Activated CD4-positive, alpha-beta memory T cell treated with anti-CD3 and anti-CD28 coated beads, Interleukin-2, amount 10 ng/mL, durations not matched to agents 7 days and 5 days (primary cell): ENCODE measurements at regions of chr11 and their contacts with region 1.

Region 1: DNA sequence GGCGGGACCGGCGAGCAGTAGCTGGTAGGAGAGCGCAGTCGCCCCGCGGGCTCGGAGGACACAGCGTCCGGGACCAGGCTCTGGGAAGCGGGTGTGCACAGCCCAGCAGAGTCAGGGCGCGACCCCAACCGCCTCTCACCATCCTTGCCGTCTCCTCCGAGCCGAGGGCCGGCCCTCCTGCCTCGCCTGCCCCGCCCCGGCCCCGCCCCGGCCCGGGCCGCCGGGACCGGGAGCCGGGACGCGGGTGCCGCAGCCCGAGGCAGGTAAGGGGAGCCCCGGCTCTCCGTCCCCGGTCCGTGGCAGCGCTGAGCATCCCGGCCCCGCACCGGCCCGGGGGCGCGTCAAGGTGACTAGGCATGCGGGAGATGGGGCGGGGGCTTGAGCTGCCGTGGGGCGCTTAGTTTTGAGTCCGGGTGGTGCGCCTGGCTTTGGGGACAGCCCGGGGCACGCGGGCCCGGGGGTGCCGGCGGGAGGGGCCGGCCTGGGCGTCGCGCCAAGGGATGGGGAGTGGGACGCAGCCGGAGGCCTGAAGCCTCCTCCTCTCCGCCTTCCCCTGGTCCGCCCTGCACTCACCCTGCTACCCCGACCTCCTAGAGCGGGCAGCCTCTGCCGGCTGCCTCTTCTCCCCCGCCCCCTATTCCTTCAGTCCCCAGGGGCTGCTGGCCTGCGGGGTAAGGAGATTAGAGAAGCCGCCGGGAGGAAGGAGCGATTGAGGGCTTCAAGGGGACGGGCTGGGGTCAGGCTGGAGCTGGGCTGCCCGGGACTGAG is at the start of gene ABCG4:
- DNase-seq: peak; percentile 29
- H3K4me3 Mint-ChIP-seq: peak within 1 kb of the TSS; percentile 53
- H3K27ac Mint-ChIP-seq: no peak within 1 kb of the TSS
- H3K4me1 Mint-ChIP-seq: peaks cover 2% of the 10 kb centered on the region
- H3K27me3 Mint-ChIP-seq: peaks cover 60% of the 10 kb centered on the region
- total RNA-seq, gene ABCG4: not detected

Region 2: GRCh38 chr11:118552341-118552740 is 596.9 kb before region 1 on chr11:
- CTCF ChIA-PET with region 1: no interaction called
- POLR2A ChIA-PET with region 1: no interaction called
- DNase-seq: no peak
- H3K4me3 Mint-ChIP-seq: no peak overlapping the region
- H3K27ac Mint-ChIP-seq: no peak overlapping the region
- H3K4me1 Mint-ChIP-seq: no peaks in the 10 kb centered on the region
- H3K27me3 Mint-ChIP-seq: no peaks in the 10 kb centered on the region

Region 3: DNA sequence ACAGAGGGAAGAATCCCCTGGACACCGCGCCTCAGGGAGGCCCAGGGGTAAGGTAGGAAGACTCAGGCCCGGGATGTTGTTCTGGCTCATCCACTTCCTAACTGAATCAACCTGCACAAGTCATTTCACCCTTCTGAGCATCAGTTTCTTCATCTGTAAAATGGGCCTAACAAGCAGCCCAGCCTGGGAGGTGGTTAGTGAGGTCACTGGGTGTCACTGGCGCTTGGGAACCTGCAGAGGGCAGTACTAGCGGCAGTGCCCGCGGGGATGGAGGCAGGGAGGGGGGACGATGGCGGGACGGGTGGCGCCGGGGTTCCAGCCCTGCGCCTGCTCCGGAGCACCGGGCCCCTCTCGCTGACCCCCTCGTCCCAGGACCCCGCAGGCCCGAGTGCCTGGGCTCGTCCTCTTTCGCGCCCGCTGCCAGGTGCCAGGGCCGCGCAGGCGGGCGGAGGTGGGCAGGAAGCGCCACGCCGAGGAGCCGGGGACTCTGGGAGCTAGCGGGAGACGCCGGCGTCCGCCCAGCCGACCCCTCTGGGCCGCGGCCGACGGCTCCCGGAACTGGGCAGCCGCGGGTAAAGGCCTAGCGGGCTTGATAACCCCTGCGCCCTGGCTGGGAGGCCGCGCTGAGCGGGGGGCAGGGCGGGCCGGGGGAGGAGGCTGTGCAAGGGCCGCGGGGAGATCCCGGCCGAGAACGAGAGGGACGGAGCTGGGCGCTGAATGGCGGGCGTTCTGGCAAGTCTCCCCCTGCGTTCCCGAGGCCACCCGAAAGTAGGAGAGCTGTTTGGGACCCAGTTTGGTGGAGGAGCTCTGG is 19.5 kb after region 1 on chr11 and contains the start of gene NLRX1:
- CTCF ChIA-PET with region 1: interaction called, 38 read pairs
- POLR2A ChIA-PET with region 1: interaction called, 18 read pairs
- DNase-seq: peak; percentile 89
- H3K4me3 Mint-ChIP-seq: peak within 1 kb of the TSS; percentile 89
- H3K27ac Mint-ChIP-seq: peak within 1 kb of the TSS; percentile 89
- H3K4me1 Mint-ChIP-seq: peaks cover 23% of the 10 kb centered on the region
- H3K27me3 Mint-ChIP-seq: no peaks in the 10 kb centered on the region
- total RNA-seq, gene NLRX1: 19.2 to 21.9 TPM

Region 4: DNA sequence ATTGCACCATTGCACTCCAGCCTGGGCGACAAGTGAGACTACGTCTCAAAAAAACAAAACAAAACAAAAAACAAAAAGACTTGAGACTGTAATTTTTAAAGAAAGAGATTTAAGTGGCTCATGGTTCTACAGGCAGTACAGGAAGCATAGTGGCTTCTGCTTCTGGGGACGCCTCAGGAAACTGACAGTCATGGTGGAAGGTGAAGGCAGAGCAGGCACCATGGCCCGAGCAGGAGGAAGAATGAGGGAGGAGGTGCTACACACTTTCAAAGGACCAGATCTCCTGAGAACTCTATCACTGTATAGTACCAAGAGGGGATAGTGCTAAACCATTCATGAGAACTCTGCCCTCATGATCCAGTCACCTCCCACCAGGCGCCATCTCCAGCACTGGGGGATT is 109.0 kb after region 1 on chr11:
- CTCF ChIA-PET with region 1: no interaction called
- POLR2A ChIA-PET with region 1: no interaction called
- DNase-seq: peak; percentile 39
- H3K4me3 Mint-ChIP-seq: no peak overlapping the region
- H3K27ac Mint-ChIP-seq: peak overlapping the region; percentile 83
- H3K4me1 Mint-ChIP-seq: peaks cover 40% of the 10 kb centered on the region
- H3K27me3 Mint-ChIP-seq: no peaks in the 10 kb centered on the region